Thyroid gland (tissue), 4 donors: ENCODE measurements at regions of chr9 and their contacts with region 1.

Region 1: DNA sequence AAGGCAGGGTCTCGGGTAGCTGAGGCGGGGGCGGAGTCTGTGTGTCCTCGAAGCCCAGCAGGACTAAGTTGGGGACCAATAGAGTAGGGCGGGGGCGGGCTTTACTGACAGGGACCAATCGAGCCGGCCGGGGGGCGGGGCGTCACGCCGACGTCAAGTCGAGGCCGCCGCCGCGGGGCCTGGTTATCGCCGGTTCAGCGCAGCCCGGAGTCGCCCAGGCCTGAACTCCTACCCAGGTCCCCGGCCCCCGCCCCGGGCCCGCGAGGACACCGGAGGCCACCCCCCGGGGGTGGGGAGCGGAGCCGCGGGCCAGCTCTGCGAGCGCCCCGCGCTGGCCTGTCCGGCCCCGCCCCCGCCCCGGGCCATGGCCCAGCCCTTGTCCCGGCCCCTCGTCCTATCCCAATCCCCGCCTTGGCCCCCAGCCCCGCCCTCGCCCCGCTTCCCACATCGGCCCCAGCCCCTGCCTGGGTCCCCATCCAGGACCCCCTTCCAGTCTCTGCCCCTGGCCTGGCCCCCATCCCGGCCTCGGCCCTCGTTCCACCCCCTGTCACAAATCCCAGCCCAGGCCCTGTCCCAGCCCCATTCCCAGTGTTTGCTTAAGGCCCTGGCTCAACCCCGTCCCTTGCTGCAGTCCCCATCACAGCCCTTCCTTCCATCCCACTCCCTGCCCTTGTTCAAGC is at the start of gene TMEM8B:
- DNase-seq: peak; percentile 98 to 100
- H3K4me3 ChIP-seq: peak within 1 kb of the TSS; percentile 22 to 76 (median 49)
- H3K27ac ChIP-seq: peak within 1 kb of the TSS; percentile 85 to 95 (median 92)
- H3K4me1 ChIP-seq: peaks cover 33 to 34% of the 10 kb centered on the region in 2 donors
- H3K27me3 ChIP-seq: no peaks in the 10 kb centered on the region
- CTCF ChIP-seq: no peak
- POLR2A ChIP-seq: peak in 1 of 2 donors; percentile 71
- total RNA-seq, gene TMEM8B: 8.5 to 17.4 (median 15.8) TPM

Region 2: GRCh38 chr9:35728041-35728971 is 100.9 kb before region 1 on chr9:
- intact Hi-C with region 1: no loop called
- DNase-seq: peak; percentile 68 to 70
- H3K4me3 ChIP-seq: peak overlapping the region in 1 of 3 donors; percentile 7
- H3K27ac ChIP-seq: peak overlapping the region; percentile 34 to 59 (median 52)
- H3K4me1 ChIP-seq: peaks cover 43 to 47% of the 10 kb centered on the region in 2 donors
- H3K27me3 ChIP-seq: no peaks in the 10 kb centered on the region
- CTCF ChIP-seq: no peak
- POLR2A ChIP-seq: peak in 1 of 2 donors; percentile 23

Region 3: DNA sequence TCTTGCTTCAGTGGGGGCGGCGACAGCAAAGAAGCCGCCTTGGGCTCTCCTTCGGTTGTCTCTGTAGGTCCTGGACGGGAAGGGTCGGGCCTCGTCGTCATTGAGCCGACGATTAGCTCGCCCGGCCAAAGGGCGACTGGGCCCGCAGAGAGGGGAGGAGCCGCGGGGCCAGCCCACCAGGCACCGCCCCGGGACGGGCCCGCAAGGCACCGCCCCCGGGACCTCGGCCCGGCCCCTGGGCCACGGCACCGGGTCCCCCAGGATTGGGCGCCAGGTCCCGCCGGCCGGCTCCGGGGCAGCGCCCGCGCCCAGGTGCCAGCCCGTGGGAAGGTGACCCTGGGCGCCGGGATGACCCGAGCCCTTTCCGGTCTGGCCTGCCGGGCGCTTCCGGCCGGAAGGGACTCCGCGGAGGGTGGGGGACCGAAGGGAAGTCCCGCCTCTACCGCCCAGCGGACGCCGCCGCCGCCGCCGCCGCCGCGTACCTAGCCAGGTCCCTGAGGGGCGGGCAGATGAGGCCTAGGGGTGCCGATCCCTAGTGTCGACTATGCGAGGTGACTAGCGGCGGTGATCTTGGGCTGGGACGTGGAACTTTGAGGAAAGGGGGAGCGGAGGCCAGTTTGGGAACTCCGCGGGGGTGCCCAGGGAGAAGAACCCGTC is 80.2 kb before region 1 on chr9 and contains the starts of genes GBA2 and RGP1:
- intact Hi-C with region 1: loop called (anchors 10 kb)
- DNase-seq: peak; percentile 85 to 86
- H3K4me3 ChIP-seq: peak within 1 kb of the TSS; percentile 61 to 69 (median 62)
- H3K27ac ChIP-seq: peak within 1 kb of the TSS; percentile 68 to 86 (median 84)
- H3K4me1 ChIP-seq: peaks cover 34 to 35% of the 10 kb centered on the region in 2 donors
- H3K27me3 ChIP-seq: no peaks in the 10 kb centered on the region
- CTCF ChIP-seq: peak in 1 of 6 experiments; percentile 2
- POLR2A ChIP-seq: peak; percentile 26 to 86
- total RNA-seq, gene GBA2: 71.4 to 111 (median 101) TPM
- total RNA-seq, gene RGP1: 25.4 to 34.0 (median 30.2) TPM

Region 4: DNA sequence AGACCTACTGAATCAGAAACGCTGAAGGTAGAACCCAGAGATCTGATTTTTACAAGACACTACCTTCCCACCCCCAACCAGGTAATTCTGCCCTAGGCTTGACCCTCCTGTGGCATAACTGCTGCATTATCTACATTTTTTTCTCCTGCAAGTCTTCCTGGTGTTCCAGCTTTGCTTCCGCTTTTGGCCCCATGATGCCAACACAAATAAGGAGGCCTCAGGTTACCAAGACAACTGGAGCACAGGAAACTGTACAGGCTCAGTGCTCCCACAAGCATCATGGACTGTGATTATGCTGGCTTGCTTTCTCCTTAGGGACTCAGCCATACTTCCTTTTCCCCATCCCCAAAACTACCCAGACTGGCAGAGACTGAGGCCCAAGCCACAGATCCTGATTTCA is 68.6 kb before region 1 on chr9:
- intact Hi-C with region 1: no loop called
- DNase-seq: peak; percentile 16 to 25
- H3K4me3 ChIP-seq: no peak overlapping the region
- H3K27ac ChIP-seq: no peak overlapping the region
- H3K4me1 ChIP-seq: peaks cover 42 to 54% of the 10 kb centered on the region in 2 donors
- H3K27me3 ChIP-seq: no peaks in the 10 kb centered on the region
- CTCF ChIP-seq: no peak
- POLR2A ChIP-seq: no peak

Region 5: DNA sequence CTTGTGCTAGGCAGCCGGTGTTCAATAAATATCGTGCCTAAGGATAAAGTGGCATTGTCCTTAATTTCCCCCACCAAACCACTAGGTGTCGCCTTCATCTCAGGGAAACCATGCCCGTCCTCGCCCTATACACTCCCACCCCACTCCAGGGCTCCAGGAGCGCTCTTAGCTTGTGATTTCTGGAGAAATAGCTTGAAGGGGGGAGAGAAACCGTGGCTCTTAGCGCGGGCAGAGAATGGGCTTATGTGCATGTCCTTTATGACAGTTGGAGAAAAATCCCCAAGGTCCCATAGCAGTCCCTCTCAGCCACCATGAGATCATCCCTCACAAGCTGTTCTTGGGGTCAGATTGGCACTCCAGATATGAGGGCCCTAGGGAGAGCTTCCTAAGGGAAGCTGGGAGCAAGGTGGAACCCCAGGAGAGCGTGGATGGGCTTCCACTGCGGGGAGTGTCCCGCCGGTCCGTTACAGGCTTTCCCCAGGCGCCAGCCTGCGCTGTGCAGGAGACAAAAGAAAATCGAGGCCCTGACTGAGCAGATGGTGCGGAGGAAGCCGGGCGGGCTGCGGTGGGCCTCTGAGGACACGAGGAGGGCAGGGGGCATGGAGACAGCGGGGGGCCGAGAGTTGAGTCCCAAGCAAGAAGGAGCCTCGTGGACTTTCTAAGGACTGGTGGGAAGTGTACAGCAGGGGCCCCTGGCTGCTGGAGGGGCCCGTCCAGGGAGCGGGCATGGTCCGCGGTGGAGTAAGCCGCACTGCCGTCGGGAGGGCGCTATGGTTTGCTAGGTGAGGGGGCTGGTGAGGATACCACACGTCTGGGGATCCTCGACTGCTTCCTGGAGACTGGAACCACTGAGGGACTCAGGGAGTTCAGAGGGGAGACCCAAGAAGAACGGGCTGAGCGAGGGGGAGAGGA is 38.6 kb before region 1 on chr9:
- intact Hi-C with region 1: loop called (anchors 5 kb)
- DNase-seq: peak; percentile 70 to 73
- H3K4me3 ChIP-seq: peak overlapping the region in 1 of 3 donors; percentile 38
- H3K27ac ChIP-seq: no peak overlapping the region
- H3K4me1 ChIP-seq: peaks cover 8 to 13% of the 10 kb centered on the region in 2 donors
- H3K27me3 ChIP-seq: no peaks in the 10 kb centered on the region
- CTCF ChIP-seq: peak; percentile 57 to 98 (median 85)
- POLR2A ChIP-seq: no peak

Region 6: DNA sequence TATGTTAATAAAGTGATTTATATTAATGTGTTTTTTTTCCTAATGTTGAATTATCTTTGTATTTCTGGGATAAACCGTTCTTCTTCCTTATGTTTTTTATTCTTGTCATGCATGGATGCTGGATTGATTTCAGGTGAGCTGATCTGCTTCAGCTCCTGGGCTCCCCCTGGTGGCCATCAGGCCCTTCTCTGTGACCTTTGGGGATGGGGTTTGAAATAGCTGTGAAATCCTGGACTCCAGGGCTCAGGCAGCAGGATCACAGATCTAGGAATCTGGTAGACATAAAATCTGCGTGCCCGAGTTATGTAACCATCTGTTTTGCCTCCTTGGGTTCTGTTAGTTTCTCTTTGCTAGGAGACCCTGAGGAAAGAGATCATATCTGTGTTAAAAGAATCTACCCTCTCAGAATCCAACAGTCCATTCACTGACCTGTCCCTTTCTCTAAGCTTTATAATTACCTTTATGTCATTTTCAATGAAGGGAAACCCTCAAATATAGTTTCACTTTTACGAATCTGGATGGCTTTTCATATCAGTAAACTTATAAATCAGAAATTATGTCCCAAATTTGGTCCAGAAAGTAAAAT is 53.1 kb after region 1 on chr9:
- intact Hi-C with region 1: loop called (anchors 5 kb)
- DNase-seq: peak; percentile 86 to 92
- H3K4me3 ChIP-seq: no peak overlapping the region
- H3K27ac ChIP-seq: no peak overlapping the region
- H3K4me1 ChIP-seq: no peaks in the 10 kb centered on the region
- H3K27me3 ChIP-seq: no peaks in the 10 kb centered on the region
- CTCF ChIP-seq: peak; percentile 89 to 94 (median 94)
- POLR2A ChIP-seq: no peak